ENCODE measurements at regions of chr14 and their contacts with region 1.

Region 1: DNA sequence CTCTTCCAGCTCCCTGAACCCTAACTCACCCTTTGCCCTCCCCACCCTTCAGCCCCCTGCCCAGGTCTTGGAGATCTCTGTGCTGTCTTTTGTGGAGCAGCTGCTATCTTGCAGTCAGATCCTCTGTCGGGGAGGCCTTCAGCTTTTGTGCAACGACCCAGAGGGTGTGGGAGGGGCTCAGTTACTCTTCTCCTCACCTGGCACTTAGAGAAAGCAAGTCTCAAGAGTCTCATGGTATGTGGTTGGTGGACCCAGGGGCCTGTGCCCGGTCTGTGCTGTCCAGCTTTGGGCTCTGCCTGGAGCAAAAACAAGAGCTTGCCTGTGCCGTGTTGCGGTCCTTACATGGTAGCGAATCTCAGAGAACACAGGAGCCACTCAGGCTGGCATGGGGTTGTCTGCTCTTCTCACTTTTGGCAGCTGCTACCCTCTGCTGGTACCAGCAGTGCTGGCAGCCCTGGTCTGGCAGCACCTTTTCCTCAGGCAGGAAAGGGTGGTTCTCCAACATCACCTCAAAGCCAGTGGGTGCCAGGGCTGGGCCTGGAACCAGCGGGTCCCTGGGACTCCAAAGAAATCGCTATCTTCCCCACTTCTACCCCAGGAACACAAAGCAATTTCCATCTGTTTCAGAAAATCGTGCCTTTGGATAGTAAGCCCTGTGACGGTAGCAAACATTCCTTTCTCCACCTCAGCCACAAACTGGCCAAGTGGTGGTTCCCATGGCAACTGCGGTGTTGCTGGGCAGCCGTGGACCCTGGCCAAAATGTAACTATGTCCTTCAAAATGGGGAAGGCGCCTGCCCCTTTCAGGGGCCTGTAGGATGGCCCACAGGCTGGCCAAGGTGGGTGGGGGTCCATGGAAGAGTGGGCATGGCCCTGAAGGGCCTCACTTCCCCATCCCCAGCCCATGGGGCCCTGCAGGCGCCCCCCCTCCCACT is 90.0 kb downstream of the RIN3 start:
- DNase-seq: peak; percentile 51
- H3K4me3 ChIP-seq: no peak overlapping the region
- H3K27ac ChIP-seq: no peak overlapping the region
- H3K4me1 ChIP-seq: peaks cover 14% of the 10 kb centered on the region
- H3K27me3 ChIP-seq: no peaks in the 10 kb centered on the region
- CTCF ChIP-seq: peak; percentile 36 to 77

Region 2: DNA sequence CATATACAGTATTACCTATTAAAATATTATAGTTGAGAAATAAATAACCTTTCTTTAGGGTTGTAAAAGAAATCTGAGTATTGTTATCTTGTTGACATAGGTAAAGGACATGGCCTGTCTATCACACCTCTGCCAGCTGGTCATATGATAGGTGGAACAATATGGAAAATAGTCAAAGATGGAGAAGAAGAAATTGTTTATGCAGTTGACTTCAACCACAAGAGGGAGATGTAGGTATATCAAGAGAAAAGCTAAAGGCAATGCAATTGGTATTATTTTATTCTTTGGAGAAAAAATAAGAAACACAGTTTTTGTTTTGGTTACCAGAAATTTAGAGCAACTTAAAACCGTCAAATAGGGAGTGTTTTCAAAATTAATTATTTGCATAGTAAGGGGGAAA is 468.3 kb before region 1 on chr14:
- CTCF ChIA-PET with region 1: no interaction called
- dilution Hi-C with region 1: no loop called
- in situ Hi-C with region 1: no loop called
- intact Hi-C with region 1: loop called (anchors 1 kb)
- DNase-seq: peak; percentile 4
- H3K4me3 ChIP-seq: no peak overlapping the region
- H3K27ac ChIP-seq: no peak overlapping the region
- H3K4me1 ChIP-seq: no peaks in the 10 kb centered on the region
- H3K27me3 ChIP-seq: no peaks in the 10 kb centered on the region
- CTCF ChIP-seq: peak; percentile 26 to 55

Region 3: GRCh38 chr14:92397150-92397952 is 206.2 kb before region 1 on chr14:
- CTCF ChIA-PET with region 1: no interaction called
- dilution Hi-C with region 1: no loop called
- in situ Hi-C with region 1: no loop called
- intact Hi-C with region 1: loop called (anchors 10 kb)
- DNase-seq: peak; percentile 72
- H3K4me3 ChIP-seq: no peak overlapping the region
- H3K27ac ChIP-seq: no peak overlapping the region
- H3K4me1 ChIP-seq: peaks cover 17% of the 10 kb centered on the region
- H3K27me3 ChIP-seq: no peaks in the 10 kb centered on the region
- CTCF ChIP-seq: no peak

Region 4: DNA sequence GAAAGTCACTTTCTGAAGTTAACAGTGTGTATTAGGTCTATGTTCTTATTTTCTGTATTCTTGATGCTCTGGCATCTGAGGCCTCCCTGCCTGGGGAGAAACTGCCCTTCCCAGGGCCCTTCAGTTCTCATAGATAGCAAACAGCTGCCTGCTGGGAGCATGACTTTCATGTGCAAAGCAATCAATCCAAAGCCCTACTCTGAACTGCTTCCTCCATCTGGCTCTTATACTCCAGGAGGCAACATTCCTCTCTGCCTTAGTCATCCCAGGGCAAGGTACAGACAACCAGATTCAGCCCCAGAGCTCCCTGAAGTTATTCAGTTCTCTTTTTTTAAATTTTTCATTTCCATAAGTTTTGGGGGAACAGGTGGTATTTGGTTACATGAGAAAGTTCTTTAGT is 131.7 kb before region 1 on chr14:
- CTCF ChIA-PET with region 1: no interaction called
- dilution Hi-C with region 1: no loop called
- in situ Hi-C with region 1: no loop called
- intact Hi-C with region 1: loop called (anchors 5 kb)
- DNase-seq: peak; percentile 76
- H3K4me3 ChIP-seq: no peak overlapping the region
- H3K27ac ChIP-seq: no peak overlapping the region
- H3K4me1 ChIP-seq: peaks cover 25% of the 10 kb centered on the region
- H3K27me3 ChIP-seq: no peaks in the 10 kb centered on the region
- CTCF ChIP-seq: no peak

Region 5: DNA sequence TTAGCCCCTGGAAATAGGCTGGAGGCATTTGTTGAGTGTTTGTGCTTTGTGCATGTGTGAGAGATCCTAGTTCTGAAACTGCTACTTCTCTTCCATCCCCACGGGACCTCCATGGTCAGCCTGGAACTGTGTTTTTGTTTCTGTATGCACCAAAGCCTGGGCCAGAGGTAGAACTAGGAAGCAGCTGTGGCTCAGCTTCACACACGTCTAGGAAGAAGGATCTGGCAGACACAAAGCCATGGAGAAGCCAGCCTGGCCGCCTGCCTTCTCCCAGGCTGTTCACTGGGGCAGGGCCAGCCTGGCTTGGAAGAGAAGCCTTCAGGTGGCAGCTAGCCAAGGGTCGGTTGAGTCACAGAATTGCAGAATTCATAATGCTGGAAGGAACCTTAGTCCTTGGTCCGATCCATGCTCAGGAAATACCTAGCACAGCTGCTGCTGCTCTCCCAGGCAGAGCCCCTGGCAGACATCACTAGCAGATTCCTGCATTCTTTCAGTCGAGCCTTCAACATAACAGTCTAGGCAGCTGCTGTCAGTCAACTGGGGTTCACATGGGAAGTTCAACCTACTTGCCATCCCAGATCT is 63.0 kb before region 1 on chr14:
- CTCF ChIA-PET with region 1: no interaction called
- dilution Hi-C with region 1: no loop called
- in situ Hi-C with region 1: no loop called
- intact Hi-C with region 1: loop called (anchors 2 kb)
- DNase-seq: peak; percentile 94
- H3K4me3 ChIP-seq: no peak overlapping the region
- H3K27ac ChIP-seq: no peak overlapping the region
- H3K4me1 ChIP-seq: peaks cover 15% of the 10 kb centered on the region
- H3K27me3 ChIP-seq: no peaks in the 10 kb centered on the region
- CTCF ChIP-seq: no peak

Region 6: GRCh38 chr14:92680781-92681650 is 77.4 kb after region 1 on chr14:
- CTCF ChIA-PET with region 1: no interaction called
- dilution Hi-C with region 1: no loop called
- in situ Hi-C with region 1: no loop called
- intact Hi-C with region 1: loop called (anchors 5 kb)
- DNase-seq: peak; percentile 61
- H3K4me3 ChIP-seq: no peak overlapping the region
- H3K27ac ChIP-seq: no peak overlapping the region
- H3K4me1 ChIP-seq: no peaks in the 10 kb centered on the region
- H3K27me3 ChIP-seq: no peaks in the 10 kb centered on the region
- CTCF ChIP-seq: peak; percentile 73 to 85

Region 7: DNA sequence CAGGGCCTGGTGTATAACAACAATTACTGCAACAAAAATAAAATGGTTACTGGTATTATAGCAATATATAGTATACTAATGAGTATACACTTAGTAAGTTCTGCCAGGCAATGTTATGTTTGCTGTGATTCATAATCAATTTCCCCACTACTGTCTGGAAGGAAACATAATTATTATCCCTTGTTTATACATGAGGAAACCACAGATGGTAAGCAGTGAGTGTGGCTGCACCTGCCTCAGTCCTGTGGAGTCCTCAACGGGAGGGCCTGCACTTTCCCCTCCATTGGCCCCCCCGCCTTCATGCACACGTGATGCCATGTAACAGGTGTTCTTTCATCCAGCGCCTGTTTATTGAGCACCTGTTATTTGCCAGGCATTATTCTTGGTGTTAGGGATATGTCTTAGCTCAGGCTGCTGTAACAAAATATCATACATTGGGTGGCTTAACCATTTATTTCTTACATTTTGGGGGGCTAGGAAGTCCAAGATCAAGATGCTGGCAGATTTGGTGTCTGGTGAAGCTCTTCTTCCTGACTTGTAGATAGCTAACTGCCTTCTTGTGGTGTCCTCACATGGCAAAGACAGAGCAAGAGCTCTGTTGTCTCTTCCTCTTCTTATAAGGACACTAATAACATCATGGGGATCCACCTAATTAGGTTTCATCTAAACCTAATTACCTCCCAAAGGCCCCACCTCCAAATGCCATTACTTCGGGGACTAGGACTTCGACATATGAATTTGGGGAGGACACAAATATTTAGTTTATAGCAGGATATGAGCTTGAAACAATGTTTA is 259.9 kb after region 1 on chr14:
- CTCF ChIA-PET with region 1: no interaction called
- dilution Hi-C with region 1: no loop called
- in situ Hi-C with region 1: no loop called
- intact Hi-C with region 1: no loop called
- DNase-seq: no peak
- H3K4me3 ChIP-seq: no peak overlapping the region
- H3K27ac ChIP-seq: no peak overlapping the region
- H3K4me1 ChIP-seq: no peaks in the 10 kb centered on the region
- H3K27me3 ChIP-seq: no peaks in the 10 kb centered on the region
- CTCF ChIP-seq: no peak